ENCODE measurements at regions of chr3 and their contacts with region 1.

Region 1: DNA sequence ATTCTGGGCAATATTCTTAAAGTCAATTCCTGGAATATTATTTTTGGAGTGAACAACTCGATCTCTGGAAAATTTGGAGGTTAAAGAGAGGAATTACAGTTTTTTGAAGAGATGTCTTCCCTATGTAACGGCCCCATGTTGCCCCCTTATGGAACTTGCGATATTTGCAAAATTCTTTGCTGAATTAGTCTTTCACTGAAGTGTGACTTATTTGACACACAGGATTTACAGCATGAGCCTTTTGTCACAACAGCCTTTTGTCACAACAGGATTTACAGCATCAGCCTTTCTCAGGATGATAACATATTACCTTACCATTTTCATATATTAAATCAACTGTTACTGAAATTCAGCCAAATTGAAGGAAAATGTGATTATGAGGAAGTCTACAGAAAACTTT is 37.8 kb upstream of the SPTSSB start:
- DNase-seq: no peak
- ATAC-seq: peak; percentile 70
- H3K4me3 ChIP-seq: no peak overlapping the region
- H3K27ac ChIP-seq: no peak overlapping the region
- H3K4me1 ChIP-seq: peaks cover 4% of the 10 kb centered on the region; the same call in 1 of the 2 replicates
- H3K27me3 ChIP-seq: no peaks in the 10 kb centered on the region
- CTCF ChIP-seq: peak; percentile 41 to 59 (median 51); a peak in 5 of 6 replicates
- EP300 ChIP-seq: no peak
- POLR2A ChIP-seq: no peak
- RAD21 ChIP-seq: peak; percentile 60

Region 2: DNA sequence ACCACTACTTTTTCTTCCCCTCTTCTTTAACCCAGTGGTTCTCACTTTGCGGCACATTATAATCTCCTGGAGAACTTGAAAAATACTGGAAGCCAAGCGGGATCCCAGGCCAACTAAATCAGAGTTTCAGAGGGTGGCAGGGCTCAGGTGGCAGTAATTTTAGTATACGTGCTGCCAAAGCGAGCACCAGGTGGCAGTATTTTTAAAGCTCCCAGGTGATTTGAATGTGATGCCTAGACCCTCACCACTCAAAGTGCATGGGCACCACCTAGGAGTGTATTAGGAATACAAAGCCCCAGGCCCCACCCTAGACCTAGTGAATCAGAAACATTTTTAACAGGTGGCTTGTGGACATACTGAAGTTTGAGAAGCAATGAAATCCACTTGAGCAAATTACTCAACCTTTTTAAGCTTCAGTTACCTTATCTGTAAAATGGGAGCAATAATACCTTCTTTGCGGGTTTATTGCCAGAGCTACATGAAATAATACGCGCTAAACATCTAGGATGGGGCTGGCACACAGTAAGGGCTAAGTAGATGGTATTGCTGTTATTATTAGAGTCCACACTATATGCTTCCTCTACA is 312.2 kb before region 1 on chr3:
- CTCF ChIA-PET with region 1: interaction called, 11 read pairs
- POLR2A ChIA-PET with region 1: no interaction called
- RAD21 ChIA-PET with region 1: no interaction called
- SMC1A ChIA-PET with region 1: interaction called, 14 read pairs
- in situ Hi-C with region 1: no loop called
- intact Hi-C with region 1: no loop called
- DNase-seq: no peak
- ATAC-seq: peak; percentile 69
- H3K4me3 ChIP-seq: no peak overlapping the region
- H3K27ac ChIP-seq: no peak overlapping the region
- H3K4me1 ChIP-seq: no peaks in the 10 kb centered on the region
- H3K27me3 ChIP-seq: no peaks in the 10 kb centered on the region; a peak in 1 of 4 replicates
- CTCF ChIP-seq: peak; percentile 41 to 43 (median 42); a peak in 5 of 6 replicates
- EP300 ChIP-seq: no peak
- POLR2A ChIP-seq: no peak
- RAD21 ChIP-seq: no peak

Region 3: GRCh38 chr3:161305095-161305991 is 103.7 kb before region 1 on chr3:
- CTCF ChIA-PET with region 1: interaction called, 7 read pairs
- POLR2A ChIA-PET with region 1: no interaction called
- RAD21 ChIA-PET with region 1: interaction called, 3 read pairs
- SMC1A ChIA-PET with region 1: interaction called, 23 read pairs
- in situ Hi-C with region 1: no loop called
- intact Hi-C with region 1: loop called (anchors 1 kb)
- DNase-seq: no peak
- ATAC-seq: peak; percentile 51
- H3K4me3 ChIP-seq: no peak overlapping the region
- H3K27ac ChIP-seq: no peak overlapping the region
- H3K4me1 ChIP-seq: no peaks in the 10 kb centered on the region
- H3K27me3 ChIP-seq: no peaks in the 10 kb centered on the region
- CTCF ChIP-seq: peak; percentile 38 to 71 (median 52)
- EP300 ChIP-seq: no peak
- POLR2A ChIP-seq: no peak
- RAD21 ChIP-seq: peak; percentile 22; the same call in 1 of the 2 replicates

Region 4: GRCh38 chr3:161393803-161394202 is 15.3 kb before region 1 on chr3:
- CTCF ChIA-PET with region 1: interaction called, 5 read pairs
- POLR2A ChIA-PET with region 1: no interaction called
- RAD21 ChIA-PET with region 1: no interaction called
- SMC1A ChIA-PET with region 1: interaction called, 23 read pairs
- in situ Hi-C with region 1: no loop called
- intact Hi-C with region 1: loop called (anchors 2 kb)
- DNase-seq: no peak
- ATAC-seq: peak; percentile 69
- H3K4me3 ChIP-seq: no peak overlapping the region
- H3K27ac ChIP-seq: no peak overlapping the region
- H3K4me1 ChIP-seq: no peaks in the 10 kb centered on the region
- H3K27me3 ChIP-seq: no peaks in the 10 kb centered on the region
- CTCF ChIP-seq: no peak
- EP300 ChIP-seq: no peak
- POLR2A ChIP-seq: no peak
- RAD21 ChIP-seq: no peak

Measured in GM12878 (cell line).